Activated naive CD4-positive, alpha-beta T cell treated with anti-CD3 and anti-CD28 coated beads for 36 hours (primary cell): ENCODE measurements at regions of chr11 and their contacts with region 1.

Region 1: DNA sequence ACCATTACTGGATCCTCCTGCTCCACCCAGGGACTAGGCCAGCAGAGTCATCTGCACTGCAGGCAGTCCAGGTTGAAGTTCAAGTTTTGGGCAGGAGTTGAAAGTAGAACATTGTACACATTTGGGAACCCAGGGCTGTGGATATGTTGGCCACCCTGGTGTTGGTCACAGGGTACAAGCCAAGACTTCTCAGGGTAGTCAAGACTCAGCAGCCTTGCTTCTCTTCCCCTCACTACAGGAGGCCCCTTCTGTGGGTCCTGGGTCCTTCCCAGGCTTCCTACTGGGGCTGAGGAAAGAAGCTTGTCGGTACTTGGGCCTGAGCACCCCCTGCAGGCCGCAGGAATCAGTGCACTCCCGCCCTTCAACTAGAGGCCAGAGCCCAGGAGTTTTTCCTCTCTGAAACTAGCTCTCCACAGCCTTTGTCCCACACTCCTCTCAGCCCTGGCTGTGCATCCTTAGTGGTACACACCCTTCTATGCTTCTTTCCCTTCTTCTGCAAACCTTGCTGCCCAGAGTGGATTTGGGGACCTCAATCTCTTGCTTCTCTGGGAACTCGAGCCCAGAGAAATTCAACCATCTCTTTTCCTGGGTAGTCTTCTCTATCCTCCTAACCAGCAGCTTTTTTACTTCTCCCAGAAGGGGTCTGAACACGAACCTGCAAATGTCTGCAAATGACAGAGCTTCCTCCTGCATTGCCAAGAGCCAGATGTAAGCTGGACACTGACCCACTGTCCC is 2.6 kb upstream of the HPX start:
- DNase-seq: peak; percentile 69
- H3K4me3 Mint-ChIP-seq: no peak overlapping the region
- H3K27ac Mint-ChIP-seq: no peak overlapping the region
- H3K4me1 Mint-ChIP-seq: no peaks in the 10 kb centered on the region
- H3K27me3 Mint-ChIP-seq: no peaks in the 10 kb centered on the region

Region 2: DNA sequence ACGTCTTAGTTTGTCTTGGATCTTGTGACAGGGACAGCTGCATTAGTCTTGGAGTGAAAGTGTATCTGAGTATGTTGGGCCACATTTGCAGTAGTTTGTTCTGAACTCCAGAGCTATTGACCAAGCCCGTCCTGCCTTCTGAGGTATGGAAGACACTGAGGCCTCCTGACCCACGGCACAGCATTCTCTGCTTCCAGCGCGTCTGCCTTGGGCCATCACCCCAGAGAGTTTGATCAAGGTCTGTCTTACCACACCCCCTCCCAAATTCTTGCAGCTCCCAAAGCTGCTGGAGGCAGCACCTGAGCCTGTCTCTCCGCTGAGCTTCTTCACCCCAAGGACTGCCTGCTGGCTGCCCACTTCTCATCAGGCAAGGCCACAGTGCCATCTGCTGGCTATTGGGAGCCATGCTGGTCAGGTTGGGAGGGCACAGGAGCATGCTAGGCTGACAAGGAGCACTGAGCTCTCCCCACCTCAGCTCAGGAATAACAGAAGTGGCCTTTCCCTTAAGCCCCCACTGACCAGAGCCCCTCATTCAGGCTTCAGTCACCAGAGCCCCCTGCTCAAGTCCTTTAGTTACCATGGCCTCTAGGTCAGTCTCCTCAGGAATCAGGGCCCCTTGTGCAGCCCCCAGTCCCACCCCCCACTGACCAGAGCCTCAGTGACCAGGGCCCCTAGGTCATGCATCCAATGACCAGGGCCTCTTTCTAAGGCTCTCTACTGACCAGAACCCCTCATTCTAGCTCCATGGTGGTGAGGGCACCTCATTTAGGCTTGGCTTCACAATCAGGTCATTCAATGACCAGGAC is 80.4 kb before region 1 on chr11:
- CTCF ChIA-PET with region 1: interaction called, 10 read pairs
- intact Hi-C with region 1: no loop called
- DNase-seq: peak; percentile 86
- H3K4me3 Mint-ChIP-seq: no peak overlapping the region
- H3K27ac Mint-ChIP-seq: no peak overlapping the region
- H3K4me1 Mint-ChIP-seq: no peaks in the 10 kb centered on the region
- H3K27me3 Mint-ChIP-seq: no peaks in the 10 kb centered on the region

Region 3: GRCh38 chr11:6419009-6419631 is 24.3 kb before region 1 on chr11 and contains the start of gene APBB1:
- CTCF ChIA-PET with region 1: interaction called, 25 read pairs
- intact Hi-C with region 1: loop called (anchors 1 kb)
- DNase-seq: peak; percentile 75
- H3K4me3 Mint-ChIP-seq: peak within 1 kb of the TSS; percentile 76
- H3K27ac Mint-ChIP-seq: peak within 1 kb of the TSS; percentile 77
- H3K4me1 Mint-ChIP-seq: peaks cover 3% of the 10 kb centered on the region
- H3K27me3 Mint-ChIP-seq: no peaks in the 10 kb centered on the region
- total RNA-seq, gene APBB1: 44.5 to 45.1 TPM

Region 4: GRCh38 chr11:6473481-6474422 is 30.3 kb after region 1 on chr11 and contains the start of gene TRIM3:
- CTCF ChIA-PET with region 1: interaction called, 12 read pairs
- intact Hi-C with region 1: no loop called
- DNase-seq: peak; percentile 62
- H3K4me3 Mint-ChIP-seq: peak within 1 kb of the TSS; percentile 80
- H3K27ac Mint-ChIP-seq: no peak within 1 kb of the TSS
- H3K4me1 Mint-ChIP-seq: peaks cover 19% of the 10 kb centered on the region
- H3K27me3 Mint-ChIP-seq: no peaks in the 10 kb centered on the region
- total RNA-seq, gene TRIM3: 7.7 to 9.4 TPM

Region 5: GRCh38 chr11:6682936-6683861 is 239.8 kb after region 1 on chr11 and contains the start of gene MRPL17:
- CTCF ChIA-PET with region 1: interaction called, 3 read pairs
- intact Hi-C with region 1: loop called (anchors 2 kb)
- DNase-seq: peak; percentile 100
- H3K4me3 Mint-ChIP-seq: peak within 1 kb of the TSS; percentile 97
- H3K27ac Mint-ChIP-seq: peak within 1 kb of the TSS; percentile 98
- H3K4me1 Mint-ChIP-seq: peaks cover 35% of the 10 kb centered on the region
- H3K27me3 Mint-ChIP-seq: no peaks in the 10 kb centered on the region
- total RNA-seq, gene MRPL17: 99.7 to 102 TPM